ENCODE measurements at regions of chr1 and their contacts with region 1.

Region 1: GRCh38 chr1:59947047-59947938 is 20.7 kb upstream of the CYP2J2 start:
- DNase-seq: peak in 8 of 9 donors; percentile 13 to 64 (median 52)
- ATAC-seq: peak; percentile 90
- H3K4me3 ChIP-seq: no peak overlapping the region
- H3K4me3 Mint-ChIP-seq: no peak overlapping the region
- H3K27ac ChIP-seq: no peak overlapping the region
- H3K27ac Mint-ChIP-seq: no peak overlapping the region
- H3K4me1 ChIP-seq: no peaks in the 10 kb centered on the region
- H3K4me1 Mint-ChIP-seq: no peaks in the 10 kb centered on the region
- H3K27me3 ChIP-seq: no peaks in the 10 kb centered on the region
- H3K27me3 Mint-ChIP-seq: peaks cover 2 to 11% (median 6%) of the 10 kb centered on the region in 5 donors

Region 2: DNA sequence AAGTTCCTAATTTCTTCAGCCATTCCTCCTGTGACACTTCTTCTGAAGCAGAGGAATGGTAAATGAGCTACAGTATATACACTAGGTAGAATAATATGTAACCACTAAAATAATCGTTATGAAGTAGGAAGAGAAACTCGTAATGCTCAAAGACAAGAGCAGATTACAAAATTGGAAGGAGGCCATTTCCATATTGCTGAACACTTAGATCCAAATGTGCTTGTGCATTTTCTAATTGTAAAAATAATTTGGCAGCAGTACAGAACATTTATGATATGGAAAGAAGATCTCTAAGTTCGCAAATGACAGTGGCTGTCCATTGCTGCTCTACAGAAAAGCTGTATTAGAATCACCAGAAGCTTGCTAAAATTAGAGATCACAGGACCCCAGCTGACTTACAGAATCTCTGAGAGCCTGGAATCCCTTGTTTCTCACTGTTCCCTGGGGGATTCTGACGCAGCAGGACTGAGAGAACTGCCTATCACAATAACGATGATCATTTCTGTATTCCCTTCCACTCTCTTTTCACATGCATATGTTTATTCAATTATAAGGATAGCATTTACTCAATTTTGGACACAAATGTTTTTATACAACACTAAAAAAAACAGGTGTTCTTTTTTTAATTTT is 1642.8 kb before region 1 on chr1:
- CTCF ChIA-PET with region 1: no interaction called
- POLR2A ChIA-PET with region 1: no interaction called
- intact Hi-C with region 1: no loop called
- DNase-seq: no peak
- ATAC-seq: no peak
- H3K4me3 ChIP-seq: no peak overlapping the region
- H3K4me3 Mint-ChIP-seq: no peak overlapping the region
- H3K27ac ChIP-seq: no peak overlapping the region
- H3K27ac Mint-ChIP-seq: no peak overlapping the region
- H3K4me1 ChIP-seq: no peaks in the 10 kb centered on the region
- H3K4me1 Mint-ChIP-seq: peaks cover 0 to 7% (median 0%) of the 10 kb centered on the region in 7 donors
- H3K27me3 ChIP-seq: no peaks in the 10 kb centered on the region
- H3K27me3 Mint-ChIP-seq: no peaks in the 10 kb centered on the region

Region 3: DNA sequence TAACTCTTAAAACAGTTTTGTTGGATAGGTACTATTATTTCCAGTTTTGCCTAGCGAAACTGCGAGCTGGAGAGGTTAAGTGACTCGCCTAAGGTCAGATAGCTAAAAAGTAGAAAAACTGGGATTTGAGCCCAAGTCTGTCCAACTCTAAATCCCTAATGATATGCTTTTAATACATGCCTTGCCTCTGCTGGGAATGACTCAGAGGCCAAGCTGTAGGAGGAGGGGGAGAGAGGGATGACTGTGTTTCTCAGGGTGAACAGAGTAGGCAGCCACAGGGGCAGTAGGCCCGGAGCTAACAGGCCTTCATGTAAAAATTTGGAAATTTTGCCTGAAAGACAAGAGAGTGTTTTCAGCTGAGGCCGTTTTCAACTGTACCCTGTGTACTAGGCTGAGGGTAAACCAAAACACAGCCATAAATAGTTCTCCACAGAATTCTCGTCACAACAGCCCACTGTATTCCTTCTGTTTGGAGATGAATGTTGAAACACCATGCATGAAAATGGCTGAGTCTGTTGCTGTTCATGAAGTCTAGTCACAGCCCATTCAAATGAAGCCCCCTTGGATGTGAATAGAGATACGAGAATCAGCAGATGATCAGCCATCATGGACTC is 240.0 kb before region 1 on chr1:
- CTCF ChIA-PET with region 1: no interaction called
- POLR2A ChIA-PET with region 1: no interaction called
- intact Hi-C with region 1: loop called in 1 of 2 experiments (anchors 10 kb)
- DNase-seq: no peak
- ATAC-seq: no peak
- H3K4me3 ChIP-seq: no peak overlapping the region
- H3K4me3 Mint-ChIP-seq: no peak overlapping the region
- H3K27ac ChIP-seq: no peak overlapping the region
- H3K27ac Mint-ChIP-seq: no peak overlapping the region
- H3K4me1 ChIP-seq: no peaks in the 10 kb centered on the region
- H3K4me1 Mint-ChIP-seq: no peaks in the 10 kb centered on the region
- H3K27me3 ChIP-seq: no peaks in the 10 kb centered on the region
- H3K27me3 Mint-ChIP-seq: no peaks in the 10 kb centered on the region

Region 4: DNA sequence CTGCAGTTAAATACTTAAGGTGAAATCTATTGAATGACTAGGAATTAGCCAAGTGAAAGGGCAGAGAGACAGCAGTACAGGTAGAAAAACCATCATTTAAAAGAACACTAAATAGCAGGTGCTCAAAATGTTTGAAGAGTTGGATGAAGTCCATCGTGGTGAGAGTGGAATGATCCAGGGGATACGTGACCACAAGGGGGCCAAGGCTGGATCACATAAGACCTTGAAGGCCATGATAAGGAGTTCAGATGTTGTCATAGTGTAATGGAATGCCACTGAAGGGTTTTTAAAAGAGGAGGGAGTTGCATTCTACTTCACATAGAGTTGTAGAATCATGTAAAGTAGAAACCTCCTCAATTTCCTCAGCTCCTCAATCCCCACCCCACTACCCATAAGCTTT is 167.3 kb before region 1 on chr1:
- CTCF ChIA-PET with region 1: interaction called, 4 read pairs
- POLR2A ChIA-PET with region 1: no interaction called
- intact Hi-C with region 1: loop called in 1 of 2 experiments (anchors 1 kb)
- DNase-seq: no peak
- ATAC-seq: no peak
- H3K4me3 ChIP-seq: no peak overlapping the region
- H3K4me3 Mint-ChIP-seq: no peak overlapping the region
- H3K27ac ChIP-seq: no peak overlapping the region
- H3K27ac Mint-ChIP-seq: no peak overlapping the region
- H3K4me1 ChIP-seq: no peaks in the 10 kb centered on the region
- H3K4me1 Mint-ChIP-seq: no peaks in the 10 kb centered on the region
- H3K27me3 ChIP-seq: no peaks in the 10 kb centered on the region
- H3K27me3 Mint-ChIP-seq: peaks cover 0 to 20% (median 0%) of the 10 kb centered on the region in 5 donors

Region 5: DNA sequence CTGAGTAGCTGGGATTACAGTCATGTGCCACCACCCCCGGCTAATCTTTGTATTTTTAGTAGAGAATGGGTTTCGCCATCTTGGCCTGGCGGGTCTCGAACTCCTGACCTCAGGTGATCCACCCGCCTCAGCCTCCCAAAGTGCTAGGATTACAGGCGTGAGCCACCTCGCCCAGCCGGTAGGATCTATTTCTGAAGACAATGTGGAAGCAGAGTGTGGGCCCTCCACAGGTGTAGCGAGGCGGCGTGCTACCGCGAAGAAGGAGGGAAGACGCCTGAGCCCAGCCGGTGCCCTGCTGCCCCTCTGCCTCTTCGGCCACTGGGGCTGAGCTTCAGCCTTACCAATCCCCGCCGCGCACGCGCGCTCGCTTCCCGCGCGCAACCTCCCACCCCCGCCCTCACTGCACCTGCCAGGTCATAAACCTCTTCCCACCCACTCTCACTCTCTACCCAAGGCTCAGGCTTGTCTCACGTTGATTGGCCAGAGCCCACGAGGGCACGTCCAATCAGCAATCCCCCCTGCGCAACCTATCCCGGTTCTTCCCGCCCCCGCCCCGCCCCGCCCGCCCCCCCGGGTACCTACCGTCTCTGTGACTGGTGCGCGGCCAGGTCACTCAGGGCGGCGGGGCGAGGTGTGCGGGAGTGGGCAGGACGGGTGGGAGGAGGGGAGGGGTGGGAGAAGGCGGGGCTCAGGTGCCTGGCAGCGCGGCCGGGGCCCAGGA is 133.0 kb before region 1 on chr1:
- CTCF ChIA-PET with region 1: interaction called, 10 read pairs
- POLR2A ChIA-PET with region 1: no interaction called
- intact Hi-C with region 1: no loop called
- DNase-seq: peak; percentile 65 to 95 (median 90)
- ATAC-seq: peak; percentile 95
- H3K4me3 ChIP-seq: peak overlapping the region; percentile 75
- H3K4me3 Mint-ChIP-seq: peak overlapping the region in 3 of 10 donors; percentile 90 to 92 (median 91)
- H3K27ac ChIP-seq: peak overlapping the region; percentile 91
- H3K27ac Mint-ChIP-seq: peak overlapping the region in 5 of 9 donors; percentile 72 to 95 (median 88)
- H3K4me1 ChIP-seq: peaks cover 0 to 23% of the 10 kb centered on the region in 2 donors
- H3K4me1 Mint-ChIP-seq: peaks cover under 1 to 8% (median 6%) of the 10 kb centered on the region in 7 donors
- H3K27me3 ChIP-seq: no peaks in the 10 kb centered on the region
- H3K27me3 Mint-ChIP-seq: peaks cover 6 to 25% (median 19%) of the 10 kb centered on the region in 5 donors

Region 6: DNA sequence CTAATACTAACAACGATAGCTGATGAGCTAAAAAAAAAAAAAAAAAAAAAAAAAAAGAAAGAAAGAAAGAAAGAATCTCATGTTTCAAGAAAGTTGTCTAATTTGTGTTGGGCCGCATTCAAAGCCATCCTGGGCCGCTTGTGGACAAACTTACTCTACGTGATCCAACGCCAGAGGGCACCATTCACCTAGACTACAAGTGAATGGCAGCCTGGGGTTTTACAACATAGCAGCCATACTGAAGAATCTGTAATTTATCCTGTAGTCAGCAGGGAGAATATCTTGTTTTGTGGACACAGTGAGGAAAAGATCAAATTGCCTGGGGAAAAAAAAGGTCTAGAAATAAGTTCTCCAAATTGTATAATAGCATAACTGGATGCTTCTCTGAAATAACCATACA is 67.7 kb before region 1 on chr1:
- CTCF ChIA-PET with region 1: interaction called, 29 read pairs
- POLR2A ChIA-PET with region 1: no interaction called
- intact Hi-C with region 1: loop called (anchors 1 kb)
- DNase-seq: peak in 8 of 9 donors; percentile 21 to 61 (median 46)
- ATAC-seq: peak; percentile 70
- H3K4me3 ChIP-seq: no peak overlapping the region
- H3K4me3 Mint-ChIP-seq: no peak overlapping the region
- H3K27ac ChIP-seq: no peak overlapping the region
- H3K27ac Mint-ChIP-seq: peak overlapping the region in 2 of 9 donors; percentile 37 to 46
- H3K4me1 ChIP-seq: no peaks in the 10 kb centered on the region
- H3K4me1 Mint-ChIP-seq: peaks cover 0 to 1% (median 0%) of the 10 kb centered on the region in 7 donors
- H3K27me3 ChIP-seq: no peaks in the 10 kb centered on the region
- H3K27me3 Mint-ChIP-seq: peaks cover 0 to 3% (median 0%) of the 10 kb centered on the region in 5 donors

Region 7: DNA sequence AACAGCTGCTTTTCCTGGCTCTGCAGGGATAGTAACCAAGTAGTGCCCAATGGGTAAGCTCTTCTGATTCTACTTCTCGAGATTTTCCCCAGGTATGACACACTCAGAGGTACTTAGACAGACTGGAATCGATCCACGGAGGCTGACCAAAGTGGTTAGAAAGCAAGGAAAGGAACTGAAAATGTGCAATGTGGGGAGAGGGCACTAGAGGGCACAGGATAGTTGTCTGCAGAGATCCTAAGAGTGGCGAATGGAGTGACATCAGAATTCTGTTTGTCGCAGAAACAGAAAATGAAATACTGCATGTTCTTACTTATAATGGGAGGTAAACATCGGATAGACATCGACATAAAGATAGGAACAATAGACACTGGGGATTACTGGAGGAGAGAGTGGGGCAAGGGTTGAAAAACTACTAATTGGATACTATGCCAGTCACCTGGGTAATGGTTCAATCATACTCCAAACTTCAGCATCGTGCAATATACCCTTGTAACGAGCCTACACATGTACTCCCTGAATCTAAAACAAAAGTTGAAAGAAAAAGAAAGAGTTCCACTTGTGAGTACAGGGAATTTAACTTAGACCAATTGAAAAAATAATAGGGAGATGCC is 44.0 kb before region 1 on chr1:
- CTCF ChIA-PET with region 1: interaction called, 11 read pairs
- POLR2A ChIA-PET with region 1: no interaction called
- intact Hi-C with region 1: loop called (anchors 1 kb)
- DNase-seq: peak in 4 of 9 donors; percentile 8 to 10 (median 9)
- ATAC-seq: peak; percentile 45
- H3K4me3 ChIP-seq: no peak overlapping the region
- H3K4me3 Mint-ChIP-seq: peak overlapping the region in 1 of 10 donors; percentile 9
- H3K27ac ChIP-seq: no peak overlapping the region
- H3K27ac Mint-ChIP-seq: peak overlapping the region in 1 of 9 donors; percentile 26
- H3K4me1 ChIP-seq: no peaks in the 10 kb centered on the region
- H3K4me1 Mint-ChIP-seq: peaks cover 0 to 5% (median 4%) of the 10 kb centered on the region in 7 donors
- H3K27me3 ChIP-seq: no peaks in the 10 kb centered on the region
- H3K27me3 Mint-ChIP-seq: peaks cover 0 to 2% (median 0%) of the 10 kb centered on the region in 5 donors